Vagina (tissue), 2 donors: ENCODE measurements at regions of chr14 and their contacts with region 1.

Region 1: DNA sequence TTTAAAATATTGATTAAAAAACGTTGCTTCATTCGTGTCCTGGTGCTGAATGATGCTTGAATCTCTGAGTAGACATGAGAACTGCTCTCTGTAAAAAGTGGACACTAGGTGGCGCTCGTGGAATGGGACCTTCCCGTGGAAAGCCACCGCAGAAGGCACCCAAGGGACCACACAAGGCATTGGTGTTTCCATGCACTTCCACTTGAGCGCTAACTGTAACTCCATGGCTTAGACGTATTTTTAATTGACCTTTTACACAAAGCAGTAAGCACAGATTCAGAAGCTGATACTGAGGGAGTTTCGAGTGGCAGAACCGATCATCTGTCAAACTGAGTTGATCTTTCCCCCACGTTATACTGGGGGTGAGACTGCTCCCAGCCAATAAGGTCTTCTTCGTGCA is 135.3 kb downstream of the PRKCH start:
- DNase-seq: no peak
- H3K4me3 ChIP-seq: no peak overlapping the region
- H3K27ac ChIP-seq: no peak overlapping the region
- H3K4me1 ChIP-seq: no peaks in the 10 kb centered on the region
- H3K27me3 ChIP-seq: no peaks in the 10 kb centered on the region
- CTCF ChIP-seq: peak; percentile 69 to 83 (median 70)
- POLR2A ChIP-seq: no peak

Region 2: DNA sequence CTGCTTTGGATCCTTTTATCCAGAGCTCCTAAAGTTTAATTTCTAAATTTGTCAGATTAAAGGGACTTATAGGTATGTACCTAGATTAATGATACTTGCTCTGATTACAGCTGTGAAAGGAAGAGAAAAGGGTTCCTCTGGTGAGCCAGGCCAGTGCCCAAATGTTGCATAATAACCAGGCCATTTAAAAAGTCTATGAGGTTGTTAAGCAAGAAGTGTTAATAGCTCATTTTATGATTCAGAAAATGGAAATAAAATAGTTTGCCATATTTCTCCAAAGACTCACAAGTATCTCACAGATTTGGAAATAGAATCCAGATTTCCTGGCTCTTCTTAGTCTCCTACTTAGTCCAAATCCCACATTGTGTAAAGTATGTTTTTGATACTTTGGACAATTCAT is 408.1 kb before region 1 on chr14:
- intact Hi-C with region 1: loop called (anchors 10 kb)
- DNase-seq: no peak
- H3K4me3 ChIP-seq: no peak overlapping the region
- H3K27ac ChIP-seq: no peak overlapping the region
- H3K4me1 ChIP-seq: no peaks in the 10 kb centered on the region
- H3K27me3 ChIP-seq: no peaks in the 10 kb centered on the region
- CTCF ChIP-seq: no peak
- POLR2A ChIP-seq: no peak

Region 3: GRCh38 chr14:61296719-61297502 is 159.8 kb before region 1 on chr14:
- intact Hi-C with region 1: loop called (anchors 10 kb)
- DNase-seq: no peak
- H3K4me3 ChIP-seq: no peak overlapping the region
- H3K27ac ChIP-seq: no peak overlapping the region
- H3K4me1 ChIP-seq: peaks cover 6% of the 10 kb centered on the region
- H3K27me3 ChIP-seq: no peaks in the 10 kb centered on the region
- CTCF ChIP-seq: peak; percentile 21 to 57 (median 49)
- POLR2A ChIP-seq: no peak

Region 4: GRCh38 chr14:61438860-61439684 is 17.6 kb before region 1 on chr14:
- intact Hi-C with region 1: loop called (anchors 1 kb)
- DNase-seq: no peak
- H3K4me3 ChIP-seq: no peak overlapping the region
- H3K27ac ChIP-seq: peak overlapping the region; percentile 47
- H3K4me1 ChIP-seq: peaks cover 21% of the 10 kb centered on the region
- H3K27me3 ChIP-seq: no peaks in the 10 kb centered on the region
- CTCF ChIP-seq: no peak
- POLR2A ChIP-seq: no peak

Region 5: GRCh38 chr14:61847861-61848260 is 391.1 kb after region 1 on chr14:
- intact Hi-C with region 1: loop called (anchors 5 kb)
- DNase-seq: no peak
- H3K4me3 ChIP-seq: no peak overlapping the region
- H3K27ac ChIP-seq: no peak overlapping the region
- H3K4me1 ChIP-seq: no peaks in the 10 kb centered on the region
- H3K27me3 ChIP-seq: no peaks in the 10 kb centered on the region
- CTCF ChIP-seq: no peak
- POLR2A ChIP-seq: no peak

Region 6: DNA sequence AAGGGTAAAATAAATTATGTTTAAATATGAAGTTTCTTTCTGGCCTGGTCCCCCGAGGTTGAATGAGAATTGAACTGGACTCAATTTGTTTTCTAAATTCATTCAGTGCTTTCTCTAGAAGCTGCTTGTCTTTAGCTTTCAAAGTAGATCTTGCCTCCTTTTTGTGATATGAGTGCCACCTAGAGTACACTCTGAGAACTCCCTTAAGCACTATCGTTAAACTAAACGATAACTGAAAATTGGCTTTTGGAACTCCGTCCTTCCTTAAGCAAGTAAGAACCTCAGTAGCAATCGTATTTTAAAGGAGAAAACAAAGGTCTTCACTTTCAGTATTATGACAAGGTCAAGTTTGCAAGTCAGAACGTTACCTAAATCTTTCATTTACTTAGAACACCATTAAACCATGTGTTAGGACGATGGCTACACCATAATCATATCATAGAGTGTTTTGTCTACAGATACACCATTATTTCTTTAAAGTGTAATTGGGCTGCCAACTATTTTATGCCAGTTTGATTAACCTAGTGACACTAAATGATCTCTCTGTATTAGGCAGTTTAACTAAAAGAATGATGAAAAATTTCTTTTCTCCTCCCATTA is 670.3 kb after region 1 on chr14:
- intact Hi-C with region 1: loop called (anchors 10 kb)
- DNase-seq: no peak
- H3K4me3 ChIP-seq: no peak overlapping the region
- H3K27ac ChIP-seq: no peak overlapping the region
- H3K4me1 ChIP-seq: no peaks in the 10 kb centered on the region
- H3K27me3 ChIP-seq: no peaks in the 10 kb centered on the region
- CTCF ChIP-seq: peak; percentile 51 to 69 (median 56)
- POLR2A ChIP-seq: no peak